Breast epithelium (tissue), 4 donors: ENCODE measurements at regions of chr4 and their contacts with region 1.

Region 1: DNA sequence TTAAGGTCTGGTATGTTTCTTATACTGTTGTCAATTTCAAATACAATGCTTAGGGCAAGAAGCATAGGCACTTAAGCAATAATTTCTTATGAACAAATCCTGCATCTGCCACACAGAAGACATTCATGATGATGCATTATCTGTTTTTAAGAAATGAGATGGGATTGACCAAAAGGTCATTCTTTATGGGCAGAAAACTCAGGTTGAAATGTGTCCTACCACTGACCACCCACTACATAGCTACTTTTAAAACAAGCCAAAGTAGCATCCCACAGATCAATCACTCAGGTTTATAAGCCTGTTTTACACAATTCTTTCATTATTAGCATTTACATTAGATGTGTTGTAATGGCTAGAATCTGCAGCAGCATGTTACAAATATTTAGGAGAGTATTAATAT is 617.8 kb downstream of the PCDH7 start:
- DNase-seq: no peak
- H3K4me3 ChIP-seq: no peak overlapping the region
- H3K27ac ChIP-seq: no peak overlapping the region
- H3K4me1 ChIP-seq: no peaks in the 10 kb centered on the region
- H3K27me3 ChIP-seq: no peaks in the 10 kb centered on the region
- CTCF ChIP-seq: no peak
- POLR2A ChIP-seq: no peak

Region 2: GRCh38 chr4:31294655-31295480 is 43.1 kb before region 1 on chr4:
- intact Hi-C with region 1: no loop called
- DNase-seq: no peak
- H3K4me3 ChIP-seq: no peak overlapping the region
- H3K27ac ChIP-seq: no peak overlapping the region
- H3K4me1 ChIP-seq: no peaks in the 10 kb centered on the region
- H3K27me3 ChIP-seq: no peaks in the 10 kb centered on the region
- CTCF ChIP-seq: no peak
- POLR2A ChIP-seq: no peak

Region 3: GRCh38 chr4:32318926-32319325 is 980.9 kb after region 1 on chr4:
- intact Hi-C with region 1: loop called (anchors 5 kb)
- DNase-seq: no peak
- H3K4me3 ChIP-seq: no peak overlapping the region
- H3K27ac ChIP-seq: no peak overlapping the region
- H3K4me1 ChIP-seq: no peaks in the 10 kb centered on the region
- H3K27me3 ChIP-seq: no peaks in the 10 kb centered on the region
- CTCF ChIP-seq: no peak
- POLR2A ChIP-seq: no peak